Gastrocnemius medialis (tissue), 4 donors: ENCODE measurements at regions of chrX and their contacts with region 1.

Region 1: GRCh38 chrX:47836164-47837072 is at the start of gene ZNF81:
- DNase-seq: peak; percentile 88 to 95
- ATAC-seq: peak; percentile 100
- H3K4me3 ChIP-seq: peak within 1 kb of the TSS; percentile 60 to 79 (median 62)
- H3K27ac ChIP-seq: peak within 1 kb of the TSS; percentile 66 to 80 (median 76)
- H3K4me1 ChIP-seq: no peaks in the 10 kb centered on the region
- H3K27me3 ChIP-seq: no peaks in the 10 kb centered on the region
- CTCF ChIP-seq: no peak
- POLR2A ChIP-seq: peak; percentile 28 to 33
- total RNA-seq, gene ZNF81: 1.00 to 4.3 (median 3.3) TPM

Region 2: GRCh38 chrX:47540754-47541538 is 295.5 kb before region 1 on chrX:
- in situ Hi-C with region 1: loop called in 1 of 4 experiments (anchors 25 kb)
- intact Hi-C with region 1: no loop called
- DNase-seq: peak; percentile 80 to 87
- ATAC-seq: peak; percentile 100
- H3K4me3 ChIP-seq: peak overlapping the region in 1 of 4 donors; percentile 11
- H3K27ac ChIP-seq: peak overlapping the region; percentile 78 to 85 (median 82)
- H3K4me1 ChIP-seq: peaks cover 10 to 16% of the 10 kb centered on the region in 2 donors
- H3K27me3 ChIP-seq: no peaks in the 10 kb centered on the region
- CTCF ChIP-seq: peak; percentile 41 to 58 (median 52)
- POLR2A ChIP-seq: peak; percentile 27 to 47

Region 3: GRCh38 chrX:47650164-47651042 is 186.0 kb before region 1 on chrX and contains the start of gene ELK1:
- in situ Hi-C with region 1: loop called in 1 of 4 experiments (anchors 25 kb)
- intact Hi-C with region 1: loop called (anchors 10 kb)
- DNase-seq: peak; percentile 95 to 97
- ATAC-seq: peak; percentile 92 to 95
- H3K4me3 ChIP-seq: peak within 1 kb of the TSS; percentile 66 to 79 (median 70)
- H3K27ac ChIP-seq: peak within 1 kb of the TSS; percentile 85 to 94 (median 92)
- H3K4me1 ChIP-seq: peaks cover 5 to 8% of the 10 kb centered on the region in 2 donors
- H3K27me3 ChIP-seq: no peaks in the 10 kb centered on the region
- CTCF ChIP-seq: no peak
- POLR2A ChIP-seq: peak; percentile 72 to 73
- total RNA-seq, gene ELK1: 35.0 to 65.6 (median 58.8) TPM

Region 4: GRCh38 chrX:47683146-47683828 is 153.1 kb before region 1 on chrX:
- in situ Hi-C with region 1: no loop called
- intact Hi-C with region 1: no loop called
- DNase-seq: no peak
- ATAC-seq: no peak
- H3K4me3 ChIP-seq: no peak overlapping the region
- H3K27ac ChIP-seq: no peak overlapping the region
- H3K4me1 ChIP-seq: no peaks in the 10 kb centered on the region
- H3K27me3 ChIP-seq: no peaks in the 10 kb centered on the region
- CTCF ChIP-seq: no peak
- POLR2A ChIP-seq: no peak

Region 5: GRCh38 chrX:48003758-48004457 is 167.5 kb after region 1 on chrX and contains the start of gene ZNF182:
- in situ Hi-C with region 1: no loop called
- intact Hi-C with region 1: loop called (anchors 5 kb)
- DNase-seq: peak; percentile 72 to 89
- ATAC-seq: peak; percentile 96 to 99
- H3K4me3 ChIP-seq: peak within 1 kb of the TSS; percentile 65 to 80 (median 71)
- H3K27ac ChIP-seq: peak within 1 kb of the TSS; percentile 66 to 85 (median 80)
- H3K4me1 ChIP-seq: peaks cover 0 to 4% of the 10 kb centered on the region in 2 donors
- H3K27me3 ChIP-seq: no peaks in the 10 kb centered on the region
- CTCF ChIP-seq: no peak
- POLR2A ChIP-seq: peak in 1 of 2 donors; percentile 31
- total RNA-seq, gene ZNF182: 1.4 to 2.2 (median 2.0) TPM

Region 6: GRCh38 chrX:48021026-48021900 is 184.8 kb after region 1 on chrX:
- in situ Hi-C with region 1: loop called in 3 of 4 experiments (anchors 10 kb)
- intact Hi-C with region 1: loop called (anchors 2 kb)
- DNase-seq: peak; percentile 32 to 60
- ATAC-seq: peak; percentile 90
- H3K4me3 ChIP-seq: peak overlapping the region; percentile 61 to 68 (median 64)
- H3K27ac ChIP-seq: peak overlapping the region; percentile 82 to 91 (median 86)
- H3K4me1 ChIP-seq: peaks cover 0 to 4% of the 10 kb centered on the region in 2 donors
- H3K27me3 ChIP-seq: no peaks in the 10 kb centered on the region
- CTCF ChIP-seq: no peak
- POLR2A ChIP-seq: no peak